ENCODE measurements at regions of chr1 and their contacts with region 1.

Region 1: GRCh38 chr1:161792740-161793139 is 26.6 kb downstream of the ATF6 start:
- DNase-seq: peak; percentile 95
- ATAC-seq: peak; percentile 98
- H3K4me3 ChIP-seq: no peak overlapping the region
- H3K27ac ChIP-seq: no peak overlapping the region
- H3K4me1 ChIP-seq: peaks cover 16% of the 10 kb centered on the region
- H3K27me3 ChIP-seq: no peaks in the 10 kb centered on the region
- CTCF ChIP-seq: peak; percentile 86

Region 2: DNA sequence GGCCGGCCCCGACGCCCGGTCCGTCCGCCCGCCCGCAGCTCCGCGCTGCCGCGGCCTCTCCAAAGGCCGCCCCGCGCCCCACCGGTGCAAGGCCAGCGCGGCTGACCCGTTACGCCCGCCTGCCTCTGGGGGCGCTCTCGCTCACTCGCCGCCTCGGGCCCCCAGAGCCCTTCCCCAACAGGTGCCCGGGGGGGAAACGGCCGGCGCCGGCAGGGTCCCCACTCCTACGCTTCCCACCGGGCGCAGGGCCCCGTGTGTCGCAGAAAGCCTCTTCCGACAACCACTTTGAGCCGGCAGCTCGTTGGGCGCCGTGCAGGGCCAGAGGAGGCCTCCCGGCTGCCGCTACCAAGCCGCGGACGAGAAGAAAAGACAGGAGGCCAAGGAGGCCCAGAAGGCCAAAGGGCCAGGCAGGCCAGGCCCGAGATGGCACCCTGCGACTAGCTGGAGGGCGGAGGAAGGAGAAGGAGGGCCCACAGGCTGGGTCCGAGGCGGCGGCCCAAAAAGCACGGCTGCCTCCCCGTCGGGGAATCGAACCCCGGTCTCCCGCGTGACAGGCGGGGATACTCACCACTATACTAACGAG is 352.3 kb before region 1 on chr1:
- CTCF ChIA-PET with region 1: no interaction called
- POLR2A ChIA-PET with region 1: no interaction called
- intact Hi-C with region 1: no loop called
- DNase-seq: peak; percentile 84
- ATAC-seq: peak; percentile 57
- H3K4me3 ChIP-seq: peak overlapping the region; percentile 79
- H3K27ac ChIP-seq: peak overlapping the region; percentile 60
- H3K4me1 ChIP-seq: peaks cover 7% of the 10 kb centered on the region
- H3K27me3 ChIP-seq: no peaks in the 10 kb centered on the region
- CTCF ChIP-seq: peak; percentile 73

Region 3: DNA sequence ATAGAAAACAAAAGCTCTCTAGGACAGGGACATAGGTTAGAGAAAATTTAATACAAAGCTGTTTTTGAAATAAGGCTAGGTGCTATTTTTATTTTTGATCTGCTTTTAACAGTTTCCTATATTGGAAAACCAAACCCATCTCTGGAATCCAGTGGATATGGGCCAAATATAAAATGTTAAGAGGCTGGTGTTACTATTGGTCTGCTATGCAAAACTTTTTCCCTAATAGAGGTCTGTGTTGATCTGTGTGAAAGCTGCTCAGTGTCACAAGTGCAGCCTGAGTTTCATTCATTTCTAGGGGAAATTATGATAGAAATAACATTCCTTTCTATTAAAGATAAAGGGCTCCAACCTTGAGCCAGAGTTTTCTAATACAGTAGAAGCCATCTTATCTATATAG is 114.5 kb after region 1 on chr1:
- CTCF ChIA-PET with region 1: interaction called, 3 read pairs
- POLR2A ChIA-PET with region 1: no interaction called
- intact Hi-C with region 1: loop called (anchors 2 kb)
- DNase-seq: no peak
- ATAC-seq: no peak
- H3K4me3 ChIP-seq: no peak overlapping the region
- H3K27ac ChIP-seq: no peak overlapping the region
- H3K4me1 ChIP-seq: peaks cover 14% of the 10 kb centered on the region
- H3K27me3 ChIP-seq: no peaks in the 10 kb centered on the region
- CTCF ChIP-seq: no peak

Region 4: DNA sequence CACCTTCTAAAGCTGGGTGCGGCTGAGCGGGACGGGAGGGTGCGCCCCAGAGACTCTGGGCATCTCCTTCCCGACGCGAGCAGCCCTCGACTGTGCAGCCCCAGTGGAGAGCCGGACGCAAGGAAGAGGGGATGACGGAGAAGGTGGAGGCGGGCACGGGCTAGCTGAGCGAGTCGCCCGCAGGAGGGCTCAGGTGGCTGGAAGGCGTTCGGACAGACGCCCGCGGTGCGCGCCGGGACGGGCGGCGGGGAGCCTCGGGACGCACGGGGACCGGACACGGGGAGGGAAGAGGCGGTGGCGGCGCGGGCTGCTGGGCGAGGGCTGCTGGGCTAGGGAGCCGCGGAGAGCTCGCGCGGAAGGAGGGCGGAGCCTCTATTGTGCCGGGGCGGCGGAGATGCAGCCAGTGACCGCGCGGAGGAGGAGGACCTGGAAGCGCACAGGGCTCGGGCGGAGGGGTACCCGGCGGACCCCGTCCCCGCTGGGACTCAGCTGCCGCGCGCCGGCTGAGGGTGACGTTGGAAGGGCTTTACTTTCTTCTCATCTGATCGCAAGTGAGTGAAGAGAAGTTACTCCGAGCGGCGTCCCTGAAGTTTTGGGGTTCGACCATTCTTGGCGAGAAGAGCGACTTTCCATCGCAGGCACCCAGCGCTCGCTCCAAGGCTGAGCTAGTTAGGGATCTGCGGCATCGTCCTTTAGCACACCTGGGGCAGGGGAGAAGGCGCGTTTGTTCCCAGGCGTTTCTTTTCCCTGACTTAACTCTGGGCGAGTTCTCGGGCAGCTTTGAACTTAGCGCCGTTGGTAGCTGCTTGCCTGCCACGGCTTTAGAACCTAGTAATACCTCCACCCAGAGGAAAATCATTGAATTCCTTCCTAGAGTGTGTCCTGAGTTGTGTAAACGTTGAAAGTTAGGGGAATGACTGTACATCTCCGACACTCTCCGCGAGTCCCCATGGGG is 231.1 kb after region 1 on chr1 and contains the start of gene OLFML2B:
- CTCF ChIA-PET with region 1: interaction called, 15 read pairs
- POLR2A ChIA-PET with region 1: interaction called, 3 read pairs
- intact Hi-C with region 1: loop called (anchors 2 kb)
- DNase-seq: peak; percentile 89
- ATAC-seq: peak; percentile 85
- H3K4me3 ChIP-seq: peak within 1 kb of the TSS; percentile 85
- H3K27ac ChIP-seq: no peak within 1 kb of the TSS
- H3K4me1 ChIP-seq: peaks cover 30% of the 10 kb centered on the region
- H3K27me3 ChIP-seq: no peaks in the 10 kb centered on the region
- CTCF ChIP-seq: peak; percentile 64
- total RNA-seq, gene OLFML2B: 0.46 and 1.4 TPM in 2 replicates

Region 5: DNA sequence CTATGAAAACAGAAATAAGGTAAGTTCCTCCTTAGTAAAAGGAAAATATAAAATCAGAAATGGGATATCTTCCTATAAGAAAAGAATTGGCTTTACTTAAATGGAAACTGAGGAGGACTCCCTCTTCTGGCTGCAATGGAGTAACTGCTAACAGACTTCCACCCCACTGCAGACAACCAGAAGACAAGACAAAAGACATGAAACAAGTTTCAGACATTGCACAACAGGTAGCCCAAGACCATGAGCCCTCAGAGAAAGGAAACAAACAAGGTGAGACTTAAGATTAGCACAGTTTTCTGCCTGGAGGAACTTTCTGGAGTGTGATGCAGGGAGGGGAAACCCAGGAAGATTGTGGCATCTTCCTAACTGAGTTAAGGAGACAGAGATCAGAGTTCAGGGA is 247.9 kb after region 1 on chr1:
- CTCF ChIA-PET with region 1: interaction called, 175 read pairs
- POLR2A ChIA-PET with region 1: interaction called, 5 read pairs
- intact Hi-C with region 1: loop called (anchors 1 kb)
- DNase-seq: peak; percentile 58
- ATAC-seq: peak; percentile 51
- H3K4me3 ChIP-seq: no peak overlapping the region
- H3K27ac ChIP-seq: no peak overlapping the region
- H3K4me1 ChIP-seq: peaks cover 8% of the 10 kb centered on the region
- H3K27me3 ChIP-seq: no peaks in the 10 kb centered on the region
- CTCF ChIP-seq: peak; percentile 80

Measured in PC-3 (cell line).